Mammary epithelial cell (primary cell): ENCODE measurements at regions of chr15 and their contacts with region 1.

Region 1: DNA sequence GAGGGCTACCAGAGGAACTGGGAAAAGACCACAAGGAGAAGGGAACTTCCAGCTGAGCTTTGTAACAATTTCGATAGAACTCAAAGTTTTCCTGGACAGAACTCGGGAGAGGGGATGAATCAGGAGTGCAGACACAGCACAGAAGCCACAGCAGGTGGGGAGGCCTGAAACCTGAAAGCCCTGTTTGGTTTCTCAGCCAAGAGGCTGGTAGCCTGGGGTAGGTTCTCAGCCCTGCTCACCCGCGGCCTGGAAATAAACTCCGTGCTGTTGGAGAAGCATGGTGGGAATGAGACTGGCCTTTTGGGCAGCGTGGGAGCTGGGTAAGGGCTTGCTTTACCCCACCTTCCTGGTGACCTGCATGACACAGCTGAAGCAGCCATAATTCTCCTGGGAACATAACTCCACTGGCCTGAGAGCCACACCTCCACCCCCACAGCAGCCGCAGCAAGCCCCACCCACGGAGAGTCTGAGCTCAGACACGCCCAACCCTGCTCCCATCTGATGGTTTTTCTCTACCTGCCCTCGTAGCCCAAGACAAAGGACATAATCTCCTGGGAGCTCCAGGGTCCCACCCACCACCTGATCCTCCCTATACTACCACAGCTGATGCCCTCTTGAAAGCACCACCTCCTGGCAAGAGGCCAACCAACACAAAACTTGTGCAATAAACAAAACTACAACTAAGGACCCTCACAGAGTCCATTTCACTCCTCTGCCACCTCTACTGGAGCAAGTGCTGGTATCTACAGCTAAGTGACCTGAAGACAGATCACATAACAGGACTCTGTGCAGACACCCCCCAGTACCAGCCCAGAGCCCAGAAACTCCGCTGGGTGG is 52.5 kb upstream of the CHRM5 start:
- DNase-seq: peak; percentile 54
- H3K4me3 ChIP-seq: no peak overlapping the region
- H3K27ac ChIP-seq: no peak overlapping the region
- H3K4me1 ChIP-seq: peaks cover 14% of the 10 kb centered on the region
- H3K27me3 ChIP-seq: no peaks in the 10 kb centered on the region
- CTCF ChIP-seq: no peak

Region 2: DNA sequence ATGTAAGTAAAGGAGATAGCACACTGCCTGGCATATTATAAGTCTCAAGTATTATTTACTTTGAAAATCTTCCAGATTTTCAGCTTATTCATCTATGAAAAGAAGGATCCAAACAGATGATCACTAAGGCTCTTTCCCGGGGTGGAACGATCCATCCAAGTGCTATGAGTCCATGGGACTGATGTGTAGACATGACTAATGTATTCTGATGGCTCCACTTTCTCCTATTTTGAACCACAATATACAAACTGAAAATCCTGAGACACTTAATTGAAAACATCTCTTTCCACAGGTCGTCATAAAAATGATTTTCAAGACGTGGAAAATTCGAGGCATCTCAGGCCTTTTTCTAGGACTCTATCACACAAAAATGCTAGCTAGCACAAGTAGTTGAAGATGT is 19.1 kb after region 1 on chr15:
- CTCF ChIA-PET with region 1: no interaction called
- dilution Hi-C with region 1: no loop called
- in situ Hi-C with region 1: no loop called
- intact Hi-C with region 1: no loop called
- DNase-seq: no peak
- H3K4me3 ChIP-seq: no peak overlapping the region
- H3K27ac ChIP-seq: no peak overlapping the region
- H3K4me1 ChIP-seq: no peaks in the 10 kb centered on the region
- H3K27me3 ChIP-seq: no peaks in the 10 kb centered on the region
- CTCF ChIP-seq: no peak

Region 3: DNA sequence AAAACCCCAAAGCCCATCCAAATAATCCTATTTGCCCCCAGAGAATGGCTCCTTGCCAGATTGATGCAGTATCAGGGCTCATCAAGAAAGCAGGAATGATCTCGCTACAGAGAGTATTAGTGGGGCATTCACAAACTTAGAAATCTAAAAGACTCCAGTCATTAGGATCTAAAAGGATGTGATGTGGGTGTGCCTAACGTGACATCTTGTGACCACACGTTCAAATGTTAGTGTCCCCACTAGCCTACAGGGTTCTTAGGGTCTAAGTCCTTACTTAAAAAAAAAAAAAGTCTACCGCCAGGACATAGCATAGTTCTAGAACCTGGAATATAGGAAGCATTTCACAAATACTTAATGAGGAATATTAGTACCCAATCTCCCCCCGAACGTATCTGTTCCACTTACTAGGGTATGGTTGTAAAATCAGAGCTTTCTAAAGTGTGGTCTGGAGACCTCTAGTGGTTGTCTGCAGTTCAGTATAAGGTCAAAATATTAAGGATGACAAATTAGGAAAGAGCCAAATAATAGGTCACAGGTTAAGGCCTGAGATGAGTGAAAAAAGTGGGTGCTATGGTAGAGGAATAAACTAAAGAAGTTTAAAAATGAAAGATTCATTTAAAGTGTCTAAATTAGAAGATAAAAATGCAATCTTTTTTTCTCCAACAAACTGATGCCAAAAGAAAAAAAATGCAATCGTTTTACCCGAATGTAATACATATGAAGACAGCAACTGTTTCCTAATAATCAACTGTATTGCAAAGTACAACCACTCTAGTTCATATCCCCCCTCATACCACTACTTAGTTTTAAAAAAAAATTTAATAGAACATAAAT is 48.3 kb after region 1 on chr15:
- CTCF ChIA-PET with region 1: interaction called, 11 read pairs
- dilution Hi-C with region 1: no loop called
- in situ Hi-C with region 1: no loop called
- intact Hi-C with region 1: no loop called
- DNase-seq: peak; percentile 14
- H3K4me3 ChIP-seq: no peak overlapping the region
- H3K27ac ChIP-seq: no peak overlapping the region
- H3K4me1 ChIP-seq: no peaks in the 10 kb centered on the region
- H3K27me3 ChIP-seq: no peaks in the 10 kb centered on the region
- CTCF ChIP-seq: peak; percentile 60 to 73